OCI-LY7 (cell line): ENCODE measurements at regions of chr3 and their contacts with region 1.

Region 1: DNA sequence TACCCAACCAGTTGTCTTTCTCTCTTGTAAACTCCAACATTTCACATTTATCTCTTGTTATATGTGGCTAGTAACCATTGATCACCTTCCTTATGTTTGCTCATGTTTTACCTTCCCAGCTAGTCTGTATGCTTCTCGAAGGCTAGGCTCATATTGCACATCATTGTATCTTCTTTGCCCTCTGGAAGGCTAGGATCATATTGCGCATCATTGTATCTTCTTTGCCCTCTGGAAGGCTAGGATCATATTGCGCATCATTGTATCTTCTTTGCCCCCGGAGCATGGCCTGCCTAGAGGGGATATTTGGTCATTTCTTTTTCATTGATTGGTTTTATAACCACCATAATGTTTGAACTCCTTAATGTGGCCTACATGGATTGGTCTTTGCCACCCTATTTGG is 39.4 kb upstream of the ATP13A3 start:
- DNase-seq: no peak
- H3K4me3 ChIP-seq: no peak overlapping the region
- H3K27ac ChIP-seq: no peak overlapping the region
- H3K4me1 ChIP-seq: no peaks in the 10 kb centered on the region
- CTCF ChIP-seq: no peak

Region 2: GRCh38 chr3:194462936-194463335 is 63.2 kb before region 1 on chr3:
- CTCF ChIA-PET with region 1: no interaction called
- POLR2A ChIA-PET with region 1: no interaction called
- intact Hi-C with region 1: no loop called
- DNase-seq: no peak
- H3K4me3 ChIP-seq: no peak overlapping the region
- H3K27ac ChIP-seq: no peak overlapping the region
- H3K4me1 ChIP-seq: peaks cover 3% of the 10 kb centered on the region
- CTCF ChIP-seq: no peak

Region 3: DNA sequence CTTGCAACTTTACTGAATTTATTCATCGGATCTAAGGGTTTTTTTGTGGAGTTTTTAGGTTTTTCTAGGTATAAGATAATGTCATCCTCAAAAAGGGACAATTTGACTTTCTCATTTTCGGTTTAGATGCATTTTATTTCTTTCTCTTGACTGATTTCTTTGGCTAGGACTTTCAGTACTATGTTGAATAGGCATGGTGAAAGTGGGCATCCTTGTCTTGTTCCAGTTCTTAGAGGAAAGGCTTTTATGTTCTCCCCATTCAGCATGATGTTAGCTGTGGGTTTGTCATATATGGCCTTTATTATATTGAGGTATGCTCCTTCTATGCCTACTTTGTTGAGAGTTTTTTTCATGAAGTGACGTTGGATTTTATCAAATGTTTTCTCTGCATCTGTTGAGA is 266.2 kb after region 1 on chr3:
- CTCF ChIA-PET with region 1: no interaction called
- POLR2A ChIA-PET with region 1: no interaction called
- intact Hi-C with region 1: loop called (anchors 5 kb)
- DNase-seq: no peak
- H3K4me3 ChIP-seq: no peak overlapping the region
- H3K27ac ChIP-seq: no peak overlapping the region
- H3K4me1 ChIP-seq: no peaks in the 10 kb centered on the region
- CTCF ChIP-seq: no peak